H1 (cell line): ENCODE measurements at regions of chr1 and their contacts with region 1.

Region 1: DNA sequence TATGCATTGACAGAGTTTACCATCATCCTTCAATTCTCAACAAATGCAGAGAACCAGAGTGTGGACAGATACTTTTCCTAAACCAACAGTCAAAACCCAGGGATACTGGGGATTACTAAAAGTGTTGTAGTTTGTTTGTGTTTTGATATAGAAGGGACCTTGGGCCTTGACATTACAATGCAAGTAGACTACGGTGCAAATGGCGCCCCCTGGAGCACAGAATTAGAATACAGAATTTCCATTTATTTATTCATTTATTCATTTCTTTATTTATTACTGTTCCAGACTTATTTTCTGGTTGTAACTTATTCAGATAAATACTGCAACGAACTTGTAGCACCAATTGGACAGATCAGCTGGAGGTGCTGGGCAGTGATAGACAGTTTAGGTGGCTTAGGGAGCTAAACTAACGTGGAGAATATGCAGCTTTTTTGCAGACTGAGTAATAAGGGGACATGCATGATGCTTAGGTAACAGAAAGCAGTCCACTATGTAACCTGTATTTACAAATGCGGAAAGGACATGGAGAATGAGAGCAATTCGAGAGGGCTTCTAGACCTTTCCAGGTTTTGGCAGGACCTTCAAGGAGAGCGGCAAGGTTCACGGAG is 42.6 kb downstream of the KIRREL1 start:
- DNase-seq: no peak
- H3K4me3 ChIP-seq: no peak overlapping the region
- H3K27ac ChIP-seq: no peak overlapping the region; the same call in 1 of the 2 replicates
- H3K4me1 ChIP-seq: peaks cover 3 to 12% (median 7%) of the 10 kb centered on the region in 4 experiments
- H3K27me3 ChIP-seq: no peaks in the 10 kb centered on the region
- CTCF ChIP-seq: peak in 2 of 3 experiments; percentile 57 to 65; a peak in 3 of 4 replicates
- EP300 ChIP-seq: no peak
- POLR2A ChIP-seq: no peak
- RAD21 ChIP-seq: peak; percentile 51 to 61

Region 2: DNA sequence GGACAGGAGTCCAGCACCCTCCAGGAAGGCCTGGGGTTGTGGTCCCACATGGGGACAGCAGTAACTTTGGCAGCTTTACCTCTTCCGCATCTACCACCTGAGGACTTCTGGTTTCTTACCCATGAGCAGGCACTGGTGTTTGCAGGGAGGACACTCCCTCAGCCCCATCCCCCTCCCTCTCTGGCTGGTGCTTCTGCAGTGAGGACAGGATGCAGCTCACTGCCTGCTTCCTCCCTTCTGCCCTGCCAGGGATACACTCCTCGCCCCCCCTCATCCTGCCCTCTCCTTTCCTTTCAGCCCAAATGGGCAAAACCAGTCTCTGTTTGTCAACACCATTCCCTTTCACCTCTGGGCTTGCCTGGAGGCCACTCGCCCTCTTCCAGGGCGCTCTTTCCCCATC is 19.8 kb after region 1 on chr1:
- CTCF ChIA-PET with region 1: interaction called, 22 read pairs
- POLR2A ChIA-PET with region 1: interaction called, 3 read pairs
- DNase-seq: no peak
- H3K4me3 ChIP-seq: no peak overlapping the region
- H3K27ac ChIP-seq: no peak overlapping the region
- H3K4me1 ChIP-seq: peaks cover 1 to 24% (median 12%) of the 10 kb centered on the region in 4 experiments
- H3K27me3 ChIP-seq: no peaks in the 10 kb centered on the region
- CTCF ChIP-seq: no peak
- EP300 ChIP-seq: no peak
- POLR2A ChIP-seq: no peak
- RAD21 ChIP-seq: no peak

Region 3: GRCh38 chr1:158095737-158096335 is 59.8 kb after region 1 on chr1:
- CTCF ChIA-PET with region 1: interaction called, 13 read pairs
- POLR2A ChIA-PET with region 1: no interaction called
- DNase-seq: peak; percentile 50 to 73
- H3K4me3 ChIP-seq: no peak overlapping the region
- H3K27ac ChIP-seq: no peak overlapping the region
- H3K4me1 ChIP-seq: peaks cover 8 to 25% (median 18%) of the 10 kb centered on the region in 4 experiments
- H3K27me3 ChIP-seq: no peaks in the 10 kb centered on the region
- CTCF ChIP-seq: peak; percentile 94 to 96 (median 94)
- EP300 ChIP-seq: no peak
- POLR2A ChIP-seq: no peak
- RAD21 ChIP-seq: peak; percentile 77 to 81